Left cardiac atrium (tissue), 4 donors: ENCODE measurements at regions of chr15 and their contacts with region 1.

Region 1: DNA sequence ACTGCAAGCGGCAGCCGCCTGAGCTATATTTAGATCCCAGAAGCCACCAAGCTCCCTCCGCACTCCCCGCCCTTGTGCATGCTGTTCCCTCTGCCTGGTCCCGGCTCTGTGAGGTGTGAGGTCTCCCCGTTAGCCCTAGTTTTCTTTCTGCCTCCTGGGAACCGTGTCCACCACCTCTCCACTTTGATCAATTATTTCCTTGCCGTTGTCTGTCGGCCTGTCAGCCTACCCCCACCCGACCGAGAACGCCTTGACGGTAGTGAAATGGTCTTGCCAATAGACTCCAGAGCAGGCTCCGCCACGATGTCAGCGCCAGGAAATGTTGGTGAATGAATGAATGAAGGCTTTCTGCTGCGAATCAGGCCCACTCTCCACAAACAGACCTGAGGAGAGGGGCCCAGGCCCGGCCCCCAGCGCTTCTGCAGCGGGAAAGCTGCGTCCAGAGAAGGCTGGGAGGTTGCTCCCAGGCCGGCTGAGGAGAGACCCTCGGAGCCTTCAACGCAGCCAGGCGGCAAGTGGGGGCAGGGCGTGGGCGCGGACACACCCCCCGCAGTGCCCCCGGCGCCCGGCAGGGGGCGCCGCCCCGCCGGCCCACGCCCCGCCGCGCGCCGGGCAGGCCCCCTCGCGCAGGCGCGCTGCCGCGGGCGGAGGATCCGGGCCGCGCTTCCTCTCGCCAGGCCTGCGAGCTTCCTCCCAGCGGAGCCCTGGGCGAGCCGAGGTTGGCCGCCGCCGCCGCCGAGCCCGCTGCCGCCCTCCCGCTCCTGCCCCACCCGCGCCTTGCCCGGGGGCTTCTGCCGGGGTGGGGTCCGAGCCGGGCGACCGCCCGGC is at the start of gene CSK:
- DNase-seq: peak; percentile 83
- ATAC-seq: peak; percentile 45 to 63
- total RNA-seq, gene CSK: 49.7 to 59.2 TPM

Region 2: GRCh38 chr15:74565381-74566085 is 216.1 kb before region 1 on chr15:
- intact Hi-C with region 1: no loop called
- DNase-seq: no peak
- ATAC-seq: no peak

Region 3: GRCh38 chr15:74709011-74709410 is 72.6 kb before region 1 on chr15:
- intact Hi-C with region 1: no loop called
- DNase-seq: no peak
- ATAC-seq: no peak

Region 4: DNA sequence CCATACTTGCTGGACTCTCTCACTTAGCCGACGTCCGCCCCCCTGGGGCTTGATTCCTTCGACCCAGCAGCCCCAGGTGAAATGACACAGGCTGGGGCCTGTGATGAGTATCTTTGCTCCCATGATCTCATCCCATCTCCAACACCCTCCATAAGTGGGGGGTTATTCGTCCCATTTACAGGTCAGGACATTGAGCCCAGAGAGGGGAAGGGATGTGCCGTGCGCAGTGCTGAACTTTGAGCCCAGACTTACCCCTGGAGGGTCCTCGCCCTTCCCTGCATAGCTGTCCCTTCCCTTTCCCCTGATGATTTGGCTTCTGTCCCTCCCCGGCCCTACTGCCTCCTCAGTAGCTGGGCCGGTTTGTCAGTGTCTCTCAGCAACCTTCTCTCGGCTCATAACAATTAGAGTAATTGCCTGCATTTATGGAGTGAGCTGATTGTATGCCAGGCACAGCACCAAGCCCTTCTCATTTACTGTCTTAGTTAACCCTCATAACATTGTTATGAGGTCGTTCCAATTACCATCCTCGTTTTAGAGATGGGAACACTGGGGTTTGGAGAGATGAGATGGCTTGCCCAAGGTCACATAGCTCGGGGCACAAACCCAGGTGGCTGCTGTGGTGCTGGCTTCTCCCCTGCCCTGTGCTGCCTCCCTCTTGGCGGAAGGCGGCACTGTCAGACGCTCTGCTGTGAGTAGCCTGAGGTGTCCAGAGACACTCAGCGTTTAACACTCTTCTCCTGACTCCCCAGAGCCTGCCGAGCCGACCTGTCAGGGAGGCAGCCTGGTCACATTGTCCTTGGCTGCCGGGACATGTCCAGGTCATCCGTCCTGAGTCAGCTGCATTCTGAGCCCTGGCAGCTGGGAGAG is 35.4 kb after region 1 on chr15:
- intact Hi-C with region 1: no loop called
- DNase-seq: peak; percentile 69
- ATAC-seq: peak; percentile 70 to 76

Region 5: GRCh38 chr15:74835307-74835823 is 53.7 kb after region 1 on chr15:
- intact Hi-C with region 1: loop called in 1 of 2 experiments (anchors 10 kb)
- DNase-seq: peak; percentile 63
- ATAC-seq: peak in 1 of 2 donors; percentile 10

Region 6: GRCh38 chr15:74937596-74938296 is 156.1 kb after region 1 on chr15 and contains the start of gene COX5A:
- intact Hi-C with region 1: loop called in 1 of 2 experiments (anchors 5 kb)
- DNase-seq: peak; percentile 95
- ATAC-seq: peak; percentile 99
- total RNA-seq, gene COX5A: 817 to 989 TPM